ENCODE measurements at regions of chr6 and their contacts with region 1.

Region 1: GRCh38 chr6:96939007-96939805 is 14.7 kb downstream of the KLHL32 start:
- DNase-seq: peak; percentile 92
- ATAC-seq: peak; percentile 87
- H3K4me3 ChIP-seq: no peak overlapping the region
- H3K27ac ChIP-seq: peak overlapping the region; percentile 63
- H3K4me1 ChIP-seq: peaks cover 20% of the 10 kb centered on the region
- H3K27me3 ChIP-seq: peaks cover 13% of the 10 kb centered on the region; the same call in 1 of the 2 replicates
- CTCF ChIP-seq: no peak

Region 2: DNA sequence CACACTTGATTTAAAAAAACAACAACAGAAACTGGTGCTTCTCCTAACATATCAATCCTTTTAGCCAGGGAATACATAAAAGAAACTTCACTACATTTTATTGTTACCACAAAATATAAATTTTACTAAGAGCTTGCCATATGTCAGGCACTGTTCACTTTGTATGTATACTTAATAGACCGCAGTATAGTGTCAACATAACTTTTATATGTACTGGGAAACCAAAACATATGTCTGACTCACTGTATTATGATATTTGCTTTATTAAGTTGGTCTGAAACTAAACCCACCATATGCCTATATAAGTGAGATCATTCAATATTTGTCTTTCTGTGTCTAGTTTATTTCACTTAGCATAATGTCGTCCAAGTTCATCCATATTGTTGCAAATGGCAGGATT is 93.7 kb after region 1 on chr6:
- CTCF ChIA-PET with region 1: no interaction called
- POLR2A ChIA-PET with region 1: no interaction called
- intact Hi-C with region 1: loop called (anchors 5 kb)
- DNase-seq: peak; percentile 70
- ATAC-seq: peak; percentile 98
- H3K4me3 ChIP-seq: no peak overlapping the region
- H3K27ac ChIP-seq: no peak overlapping the region
- H3K4me1 ChIP-seq: peaks cover 4% of the 10 kb centered on the region; the same call in 1 of the 2 replicates
- H3K27me3 ChIP-seq: peaks cover 38% of the 10 kb centered on the region
- CTCF ChIP-seq: no peak

Measured in PC-3 (cell line).